ENCODE measurements at regions of chr6 and their contacts with region 1.

Region 1: GRCh38 chr6:85482905-85483700 is 33.2 kb downstream of the NT5E start:
- DNase-seq: peak; percentile 57
- H3K4me3 ChIP-seq: no peak overlapping the region
- H3K27ac ChIP-seq: no peak overlapping the region
- H3K4me1 ChIP-seq: no peaks in the 10 kb centered on the region
- H3K27me3 ChIP-seq: no peaks in the 10 kb centered on the region
- CTCF ChIP-seq: peak; percentile 97 to 99

Region 2: DNA sequence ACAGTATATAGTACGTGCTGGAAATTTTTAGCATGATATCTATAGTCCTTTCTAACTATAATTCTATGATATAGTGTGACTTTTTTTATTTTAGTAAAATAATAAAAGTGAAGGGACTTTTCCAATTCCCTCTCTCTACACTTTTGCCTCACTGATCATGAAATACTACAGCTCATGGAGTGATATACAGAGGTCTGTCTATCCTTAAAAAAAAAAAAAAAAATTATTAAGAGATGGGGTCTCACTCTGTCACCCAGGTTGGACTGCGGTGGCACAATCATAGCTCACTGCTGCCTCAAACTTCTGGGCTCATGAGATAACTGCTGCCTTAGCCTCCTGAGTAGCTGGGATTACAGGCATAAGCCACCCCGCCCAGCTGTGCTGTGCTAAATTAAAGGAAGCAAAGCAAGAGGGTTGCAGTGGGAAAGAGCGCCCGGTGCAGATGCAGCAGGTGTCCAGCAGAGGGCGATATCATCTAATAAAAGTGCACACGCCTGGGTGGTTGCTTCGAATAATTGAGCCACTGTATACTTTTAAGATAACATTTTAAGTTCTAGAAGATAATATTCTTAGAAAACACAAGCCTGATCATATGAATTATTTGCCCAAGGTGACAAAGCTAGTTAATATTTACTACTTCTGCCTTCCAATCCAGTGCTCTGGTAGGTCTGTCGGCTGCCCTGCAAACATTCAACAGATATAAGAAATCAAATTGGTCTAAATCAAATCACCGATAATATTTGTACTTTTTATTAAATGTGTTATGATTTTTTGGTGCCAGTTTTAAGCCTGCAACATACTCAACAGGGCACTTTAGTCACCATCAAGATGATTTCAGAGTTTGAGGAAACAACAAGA is 128.1 kb before region 1 on chr6:
- CTCF ChIA-PET with region 1: interaction called, 3 read pairs
- dilution Hi-C with region 1: loop called (anchors 5 kb)
- in situ Hi-C with region 1: loop called (anchors 5 kb)
- intact Hi-C with region 1: loop called (anchors 1 kb)
- DNase-seq: peak; percentile 64
- H3K4me3 ChIP-seq: no peak overlapping the region
- H3K27ac ChIP-seq: no peak overlapping the region
- H3K4me1 ChIP-seq: peaks cover 6% of the 10 kb centered on the region
- H3K27me3 ChIP-seq: no peaks in the 10 kb centered on the region
- CTCF ChIP-seq: peak; percentile 91 to 96

Region 3: DNA sequence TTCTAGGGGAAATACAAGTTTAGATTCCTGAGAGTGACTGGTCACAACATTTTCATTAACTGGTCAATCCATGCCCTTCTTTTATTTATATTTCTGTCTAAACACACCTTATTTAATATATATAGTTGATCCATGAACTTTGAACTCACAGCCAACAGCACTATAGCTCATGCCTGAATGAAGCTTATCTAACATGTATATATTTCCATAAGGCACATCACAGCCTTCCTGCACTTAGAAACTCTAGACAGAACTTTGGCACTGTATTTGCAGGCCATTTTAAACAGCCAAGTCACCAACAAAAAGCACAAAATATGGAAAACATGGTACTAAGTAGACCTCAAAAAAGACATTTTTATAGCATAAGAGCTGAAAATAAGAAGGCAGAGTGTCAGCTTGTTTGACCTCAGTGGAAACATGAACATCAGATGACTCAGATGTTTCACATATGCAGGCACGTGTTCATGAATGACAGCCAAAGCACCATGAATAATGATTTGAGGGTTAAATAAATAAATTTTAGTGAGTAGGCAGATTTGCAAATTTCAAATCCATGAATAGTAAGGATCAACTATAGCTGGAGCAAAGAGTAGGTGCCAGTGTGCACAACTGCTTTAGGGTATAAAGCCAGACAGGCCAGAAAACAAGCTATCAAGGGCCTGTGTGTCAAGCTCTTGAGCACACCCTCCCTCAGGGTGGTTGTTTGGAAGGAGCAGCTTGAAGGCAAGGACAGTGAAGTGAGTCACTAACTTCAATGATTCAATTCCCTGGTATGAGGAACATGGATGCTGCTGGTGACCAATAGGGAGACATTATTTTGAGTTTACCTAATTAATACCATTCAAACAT is 122.1 kb before region 1 on chr6:
- CTCF ChIA-PET with region 1: interaction called, 5 read pairs
- dilution Hi-C with region 1: no loop called
- in situ Hi-C with region 1: loop called in 1 of 2 experiments (anchors 5 kb)
- intact Hi-C with region 1: no loop called
- DNase-seq: peak; percentile 93
- H3K4me3 ChIP-seq: no peak overlapping the region
- H3K27ac ChIP-seq: peak overlapping the region; percentile 83
- H3K4me1 ChIP-seq: peaks cover 44% of the 10 kb centered on the region
- H3K27me3 ChIP-seq: no peaks in the 10 kb centered on the region
- CTCF ChIP-seq: no peak

Region 4: GRCh38 chr6:85449818-85450759 is 33.0 kb before region 1 on chr6 and contains the start of gene NT5E:
- CTCF ChIA-PET with region 1: interaction called, 6 read pairs
- dilution Hi-C with region 1: no loop called
- in situ Hi-C with region 1: no loop called
- intact Hi-C with region 1: loop called (anchors 1 kb)
- DNase-seq: peak; percentile 77
- H3K4me3 ChIP-seq: peak within 1 kb of the TSS; percentile 71 to 87 (median 75)
- H3K27ac ChIP-seq: peak within 1 kb of the TSS; percentile 84
- H3K4me1 ChIP-seq: peaks cover 38% of the 10 kb centered on the region
- H3K27me3 ChIP-seq: no peaks in the 10 kb centered on the region
- CTCF ChIP-seq: peak in 1 of 2 donors; percentile 11
- total RNA-seq, gene NT5E: 74.2 to 228 TPM

Region 5: DNA sequence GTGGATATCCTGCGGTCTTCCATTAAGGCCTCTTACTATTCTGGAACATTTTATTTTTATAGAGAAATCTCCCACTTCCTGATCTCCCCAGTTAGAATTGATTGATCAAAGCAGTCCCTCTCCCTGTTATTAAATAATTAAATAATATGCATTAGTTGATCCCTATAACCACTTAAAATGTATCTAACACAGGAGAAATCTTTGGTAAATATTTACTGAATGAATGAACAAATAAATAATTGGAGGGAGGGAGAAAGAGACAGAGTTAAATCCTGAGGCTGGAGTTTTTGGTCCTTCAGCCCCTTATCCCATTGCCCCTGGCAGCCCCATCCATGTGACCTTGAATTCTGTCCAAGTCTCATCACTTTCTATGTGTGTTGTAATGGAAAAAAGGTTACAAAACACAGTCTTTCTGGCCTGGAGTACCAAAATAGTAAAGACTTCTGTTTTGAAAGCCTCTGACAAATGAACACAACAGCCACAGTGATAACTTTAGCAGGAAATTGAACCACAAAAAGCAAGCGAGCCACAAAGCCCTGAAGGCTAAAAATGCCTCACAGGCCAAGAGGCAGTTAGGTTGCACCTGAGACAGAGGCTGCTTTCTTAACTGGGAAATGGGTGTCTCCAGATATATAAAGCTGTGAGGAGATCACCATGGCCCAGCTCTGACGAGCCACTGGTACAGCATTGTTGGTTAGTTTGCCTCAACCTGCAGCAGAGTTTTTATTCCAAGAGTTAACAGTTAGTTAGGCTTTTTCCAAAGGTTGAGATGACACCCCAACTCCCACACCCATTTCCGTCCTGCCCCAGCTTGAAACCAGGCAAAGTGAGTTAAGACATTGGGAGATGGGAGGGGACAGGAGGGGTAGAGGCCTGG is 21.9 kb before region 1 on chr6:
- CTCF ChIA-PET with region 1: no interaction called
- dilution Hi-C with region 1: no loop called
- in situ Hi-C with region 1: no loop called
- intact Hi-C with region 1: loop called (anchors 2 kb)
- DNase-seq: peak; percentile 86
- H3K4me3 ChIP-seq: no peak overlapping the region
- H3K27ac ChIP-seq: peak overlapping the region; percentile 61
- H3K4me1 ChIP-seq: peaks cover 100% of the 10 kb centered on the region
- H3K27me3 ChIP-seq: no peaks in the 10 kb centered on the region
- CTCF ChIP-seq: no peak